ENCODE measurements at regions of chr1 and their contacts with region 1.

Region 1: DNA sequence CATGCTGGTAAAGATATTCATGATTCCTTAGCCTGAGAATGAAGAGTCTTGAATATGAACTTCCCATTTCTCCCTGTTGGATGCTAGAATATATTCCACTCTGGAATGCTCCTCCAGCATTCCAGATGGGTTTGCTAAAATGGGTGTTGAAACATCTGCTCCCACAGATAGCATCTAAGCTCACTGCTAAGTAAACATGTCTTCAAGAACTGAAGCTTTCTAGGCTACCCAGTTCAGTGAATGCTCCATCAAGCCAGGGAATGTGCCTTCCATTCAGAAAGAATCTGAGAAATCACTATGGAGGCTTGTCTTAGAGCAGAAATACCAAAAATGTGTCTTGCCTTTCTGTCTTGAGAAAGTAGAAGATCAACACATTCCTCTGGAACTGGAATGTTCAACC is 81.1 kb downstream of the TNFSF18 start:
- DNase-seq: no peak
- H3K4me3 Mint-ChIP-seq: no peak overlapping the region
- H3K27ac Mint-ChIP-seq: no peak overlapping the region
- H3K4me1 Mint-ChIP-seq: peaks cover 10% of the 10 kb centered on the region
- H3K27me3 Mint-ChIP-seq: peaks cover 6% of the 10 kb centered on the region

Region 2: DNA sequence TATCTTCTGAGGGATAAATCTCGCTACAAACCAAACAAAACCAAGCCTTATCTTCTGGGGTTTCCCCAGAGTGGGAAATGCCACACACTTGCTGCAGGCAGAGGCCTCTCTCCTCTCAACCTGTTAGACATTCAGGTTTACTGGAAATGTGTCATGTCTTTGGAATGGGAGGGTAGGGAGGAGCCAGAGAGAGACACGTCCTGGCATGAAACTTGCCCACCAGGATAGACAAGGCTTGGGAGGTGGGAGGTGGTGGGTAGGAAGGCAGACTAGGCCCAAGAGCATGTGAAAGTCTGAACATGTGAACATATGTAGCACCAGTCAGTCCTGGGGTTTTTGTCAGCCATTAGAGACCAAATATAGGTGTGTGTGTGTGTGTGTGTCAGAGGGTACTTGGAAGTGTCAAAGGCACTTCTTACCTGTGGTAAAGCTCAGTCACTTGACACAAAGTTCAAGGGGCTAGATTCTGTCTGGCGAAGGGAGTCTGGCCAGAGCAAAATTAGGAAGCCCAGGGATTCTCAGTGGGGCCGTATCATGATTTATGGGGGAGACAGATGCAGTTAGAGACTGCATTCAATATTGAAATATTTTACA is 493.3 kb before region 1 on chr1:
- CTCF ChIA-PET with region 1: no interaction called
- POLR2A ChIA-PET with region 1: no interaction called
- intact Hi-C with region 1: no loop called
- DNase-seq: no peak
- H3K4me3 Mint-ChIP-seq: no peak overlapping the region
- H3K27ac Mint-ChIP-seq: no peak overlapping the region
- H3K4me1 Mint-ChIP-seq: peaks cover 5% of the 10 kb centered on the region
- H3K27me3 Mint-ChIP-seq: peaks cover 7% of the 10 kb centered on the region

Region 3: DNA sequence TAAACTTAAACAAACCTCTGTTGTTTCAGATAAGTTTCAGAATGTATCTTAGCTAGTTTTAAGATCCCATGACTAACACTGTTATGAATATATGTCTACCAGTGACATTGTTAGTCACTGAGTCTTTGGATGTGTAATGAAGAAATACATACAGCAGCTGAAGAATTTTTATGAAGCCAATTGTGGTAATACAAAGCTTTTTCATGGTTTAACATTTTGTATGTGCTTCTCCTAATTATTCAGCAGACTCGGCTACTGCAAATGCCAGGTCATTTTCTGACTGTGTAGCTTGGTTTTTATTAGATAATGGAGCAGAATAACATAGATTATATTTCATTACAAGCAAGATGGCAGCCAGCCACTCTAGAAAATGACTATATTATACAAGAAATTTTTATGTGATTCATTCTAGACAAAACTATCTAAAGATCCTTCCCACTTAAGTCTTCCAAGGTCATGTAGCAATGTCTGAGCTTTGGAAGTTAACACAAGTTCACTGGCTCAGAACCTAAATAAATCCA is 66.7 kb before region 1 on chr1:
- CTCF ChIA-PET with region 1: interaction called, 3 read pairs
- POLR2A ChIA-PET with region 1: no interaction called
- intact Hi-C with region 1: loop called (anchors 1 kb)
- DNase-seq: no peak
- H3K4me3 Mint-ChIP-seq: no peak overlapping the region
- H3K27ac Mint-ChIP-seq: no peak overlapping the region
- H3K4me1 Mint-ChIP-seq: peaks cover 29% of the 10 kb centered on the region
- H3K27me3 Mint-ChIP-seq: peaks cover 10% of the 10 kb centered on the region

Measured in activated CD4-positive, alpha-beta memory T cell treated with anti-CD3 and anti-CD28 coated beads for 36 hours (primary cell).